Activated B cell treated with CpG ODN at 0.5 μM for 24 hours (primary cell): ENCODE measurements at regions of chr17 and their contacts with region 1.

Region 1: DNA sequence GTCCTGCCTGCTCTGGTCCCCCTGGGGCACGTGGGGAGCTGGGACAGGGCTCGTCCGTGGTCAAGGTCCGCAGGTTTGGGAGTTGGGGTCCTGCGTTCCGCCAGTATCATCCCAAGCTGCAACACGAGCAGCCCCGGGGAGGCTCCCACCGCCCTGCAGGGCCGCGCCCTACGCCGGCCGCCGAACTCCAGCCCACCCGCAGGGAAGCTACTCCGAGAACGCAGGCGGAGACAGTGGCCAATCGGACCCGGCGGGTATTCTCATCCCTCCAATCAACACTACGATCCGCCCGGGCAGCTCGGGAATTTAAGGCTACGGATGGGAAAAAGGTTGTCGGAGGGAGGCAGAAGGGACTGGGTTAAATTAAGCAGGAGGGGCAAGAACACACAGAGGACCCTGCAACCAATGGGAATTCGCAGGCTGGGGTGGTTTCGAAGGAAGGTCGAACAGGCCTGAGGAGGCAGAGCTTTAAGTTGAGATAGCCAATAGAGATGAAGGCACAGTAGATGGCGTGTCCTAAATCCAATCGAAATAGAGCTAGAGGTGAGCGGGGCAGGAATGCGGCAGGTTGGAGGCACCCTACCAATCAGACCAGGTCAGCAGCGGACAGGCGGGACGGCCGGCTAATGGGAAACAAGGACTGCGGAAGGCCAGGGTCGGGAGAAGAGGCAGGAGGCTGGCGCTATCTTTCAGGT is 626 bp downstream of the SPAG7 start:
- DNase-seq: no peak
- ATAC-seq: peak; percentile 87
- H3K4me3 Mint-ChIP-seq: no peak overlapping the region
- H3K27ac Mint-ChIP-seq: no peak overlapping the region
- H3K4me1 Mint-ChIP-seq: peaks cover 18% of the 10 kb centered on the region
- H3K27me3 Mint-ChIP-seq: no peaks in the 10 kb centered on the region
- CTCF ChIP-seq: no peak

Region 2: DNA sequence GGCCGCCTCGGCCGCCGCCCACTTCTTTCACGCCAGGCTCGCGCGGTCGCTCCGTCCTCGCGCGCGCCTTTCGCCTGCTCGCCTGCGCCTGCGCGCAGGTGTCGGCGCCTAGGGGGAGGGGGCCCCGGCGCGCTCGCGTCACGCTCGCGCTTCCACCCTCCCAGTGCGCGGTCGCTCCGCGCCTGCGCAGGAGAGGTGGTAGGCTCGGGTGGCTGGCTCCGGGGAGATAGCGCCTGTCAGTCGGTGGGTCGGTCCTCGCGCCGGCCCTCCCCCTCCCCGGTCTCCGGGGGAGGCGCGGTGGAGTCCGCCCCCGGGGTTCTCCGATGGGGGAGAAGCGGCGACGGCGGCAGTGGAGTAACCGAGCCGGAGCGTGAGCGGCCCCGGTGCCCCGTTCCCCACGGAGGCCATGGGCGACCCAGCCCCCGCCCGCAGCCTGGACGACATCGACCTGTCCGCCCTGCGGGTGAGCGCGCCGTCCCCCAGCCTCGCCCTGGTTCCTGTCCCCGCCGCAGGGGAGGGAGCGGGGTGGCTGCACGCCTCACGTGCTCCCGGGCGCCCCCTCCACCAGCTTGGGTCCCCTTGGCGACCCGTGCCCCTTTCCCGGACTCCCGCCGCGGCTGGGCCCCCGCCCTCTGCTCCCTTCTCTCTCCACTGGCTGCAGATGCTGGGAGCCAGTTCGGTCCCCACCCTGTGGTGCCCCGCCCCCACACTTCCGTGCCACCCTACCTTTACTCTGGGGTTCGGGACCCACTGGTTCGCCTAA is 133.6 kb before region 1 on chr17 and contains the start of gene MINK1:
- CTCF ChIA-PET with region 1: no interaction called
- POLR2A ChIA-PET with region 1: no interaction called
- intact Hi-C with region 1: loop called (anchors 1 kb)
- DNase-seq: peak; percentile 88
- ATAC-seq: peak; percentile 95
- H3K4me3 Mint-ChIP-seq: peak within 1 kb of the TSS; percentile 94
- H3K27ac Mint-ChIP-seq: peak within 1 kb of the TSS; percentile 96
- H3K4me1 Mint-ChIP-seq: peaks cover 33% of the 10 kb centered on the region
- H3K27me3 Mint-ChIP-seq: no peaks in the 10 kb centered on the region
- CTCF ChIP-seq: no peak
- total RNA-seq, gene MINK1: 61.3 and 65.3 TPM in 2 replicates

Region 3: GRCh38 chr17:4934173-4934979 is 32.6 kb before region 1 on chr17:
- CTCF ChIA-PET with region 1: interaction called, 9 read pairs
- POLR2A ChIA-PET with region 1: interaction called, 83 read pairs
- intact Hi-C with region 1: loop called (anchors 5 kb)
- DNase-seq: no peak
- ATAC-seq: peak; percentile 21
- H3K4me3 Mint-ChIP-seq: no peak overlapping the region
- H3K27ac Mint-ChIP-seq: no peak overlapping the region
- H3K4me1 Mint-ChIP-seq: peaks cover 48% of the 10 kb centered on the region
- H3K27me3 Mint-ChIP-seq: peaks cover 15% of the 10 kb centered on the region
- CTCF ChIP-seq: no peak

Region 4: DNA sequence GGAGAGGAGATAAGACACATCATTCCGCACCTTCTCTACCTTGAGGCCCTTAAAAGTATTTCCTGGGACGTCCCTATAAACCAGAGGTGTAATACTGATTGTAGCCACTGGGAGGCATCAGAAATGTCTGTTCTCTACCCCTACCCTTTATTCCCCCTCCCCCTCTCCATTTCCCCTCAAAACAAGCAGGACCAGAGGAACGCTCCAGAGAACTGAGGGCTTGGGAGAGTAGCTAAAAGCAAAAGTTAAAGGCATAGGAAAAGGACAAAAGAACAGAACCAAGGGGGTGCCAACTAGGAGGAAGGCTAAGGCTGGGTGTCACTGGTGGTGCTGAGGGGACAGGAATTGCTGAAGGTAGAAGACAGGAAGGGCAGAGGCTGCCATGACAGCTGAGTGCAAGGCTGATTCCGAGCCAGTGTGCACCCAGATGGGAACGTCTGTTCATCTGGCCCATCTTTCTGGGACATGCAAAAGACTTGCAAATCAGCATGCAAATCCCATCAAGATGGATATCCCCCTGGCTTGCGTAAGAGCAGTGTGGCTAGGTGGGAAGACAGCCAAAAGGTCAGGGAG is 13.7 kb after region 1 on chr17:
- CTCF ChIA-PET with region 1: interaction called, 6 read pairs
- POLR2A ChIA-PET with region 1: interaction called, 44 read pairs
- intact Hi-C with region 1: no loop called
- DNase-seq: no peak
- ATAC-seq: peak; percentile 68
- H3K4me3 Mint-ChIP-seq: peak overlapping the region; percentile 2
- H3K27ac Mint-ChIP-seq: peak overlapping the region; percentile 37
- H3K4me1 Mint-ChIP-seq: peaks cover 41% of the 10 kb centered on the region
- H3K27me3 Mint-ChIP-seq: no peaks in the 10 kb centered on the region
- CTCF ChIP-seq: peak; percentile 55

Region 5: GRCh38 chr17:4997302-4998026 is 30.5 kb after region 1 on chr17 and contains the starts of genes INCA1 and KIF1C:
- CTCF ChIA-PET with region 1: interaction called, 4 read pairs
- POLR2A ChIA-PET with region 1: interaction called, 34 read pairs
- intact Hi-C with region 1: loop called (anchors 1 kb)
- DNase-seq: peak; percentile 95
- ATAC-seq: peak; percentile 95
- H3K4me3 Mint-ChIP-seq: peak within 1 kb of the TSS; percentile 85
- H3K27ac Mint-ChIP-seq: peak within 1 kb of the TSS; percentile 90
- H3K4me1 Mint-ChIP-seq: peaks cover 20% of the 10 kb centered on the region
- H3K27me3 Mint-ChIP-seq: no peaks in the 10 kb centered on the region
- CTCF ChIP-seq: no peak
- total RNA-seq, gene INCA1: 0.17 and 0.44 TPM in 2 replicates
- total RNA-seq, gene KIF1C: 62.6 and 63.8 TPM in 2 replicates

Region 6: GRCh38 chr17:5065227-5065744 is 98.3 kb after region 1 on chr17:
- CTCF ChIA-PET with region 1: interaction called, 13 read pairs
- POLR2A ChIA-PET with region 1: interaction called, 3 read pairs
- intact Hi-C with region 1: no loop called
- DNase-seq: no peak
- ATAC-seq: no peak
- H3K4me3 Mint-ChIP-seq: no peak overlapping the region
- H3K27ac Mint-ChIP-seq: no peak overlapping the region
- H3K4me1 Mint-ChIP-seq: peaks cover 6% of the 10 kb centered on the region
- H3K27me3 Mint-ChIP-seq: peaks cover 5% of the 10 kb centered on the region
- CTCF ChIP-seq: no peak